PC-9 (cell line): ENCODE measurements at regions of chr12 and their contacts with region 1.

Region 1: GRCh38 chr12:53561590-53561953 is 54.3 kb upstream of the NPFF start:
- DNase-seq: peak; percentile 9 to 93
- H3K4me3 ChIP-seq: peak overlapping the region; percentile 28; the same call in 1 of the 2 replicates
- H3K27ac ChIP-seq: peak overlapping the region; percentile 78
- H3K4me1 ChIP-seq: peaks cover 26% of the 10 kb centered on the region
- H3K27me3 ChIP-seq: no peaks in the 10 kb centered on the region
- CTCF ChIP-seq: no peak

Region 2: DNA sequence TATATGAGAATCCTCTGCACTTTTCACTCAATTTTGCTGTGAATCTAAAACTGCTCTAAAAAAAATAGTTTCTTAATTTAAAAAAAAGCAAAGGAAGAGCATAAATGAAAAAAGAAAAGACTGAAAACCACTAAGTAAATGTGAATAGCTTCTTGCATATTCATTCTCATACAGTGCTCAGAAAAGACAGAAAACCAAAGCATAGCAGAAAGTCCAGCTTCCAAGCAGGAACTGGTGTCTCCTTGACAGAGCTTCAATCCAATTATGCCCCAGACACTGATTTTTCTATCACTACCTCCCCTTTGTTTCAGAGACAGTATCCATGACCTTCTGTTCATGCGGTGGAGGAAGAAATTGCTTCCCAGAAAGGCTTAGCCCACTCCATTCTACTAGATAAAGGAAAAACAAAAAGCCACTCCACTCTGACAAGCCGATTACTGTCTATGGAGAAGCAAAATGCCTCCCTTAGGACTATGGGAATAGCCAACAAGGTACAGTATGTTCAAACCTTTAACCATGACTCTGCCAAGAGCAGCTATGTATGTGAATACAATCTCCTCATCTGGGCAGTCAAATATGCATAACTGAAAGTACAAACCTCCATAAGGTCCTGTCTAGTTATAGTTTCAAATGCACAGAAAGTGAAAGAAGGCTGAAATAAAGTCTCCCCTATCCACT is 24.0 kb after region 1 on chr12:
- CTCF ChIA-PET with region 1: no interaction called
- POLR2A ChIA-PET with region 1: no interaction called
- intact Hi-C with region 1: no loop called
- DNase-seq: no peak
- H3K4me3 ChIP-seq: no peak overlapping the region
- H3K27ac ChIP-seq: no peak overlapping the region
- H3K4me1 ChIP-seq: no peaks in the 10 kb centered on the region
- H3K27me3 ChIP-seq: no peaks in the 10 kb centered on the region
- CTCF ChIP-seq: no peak

Region 3: DNA sequence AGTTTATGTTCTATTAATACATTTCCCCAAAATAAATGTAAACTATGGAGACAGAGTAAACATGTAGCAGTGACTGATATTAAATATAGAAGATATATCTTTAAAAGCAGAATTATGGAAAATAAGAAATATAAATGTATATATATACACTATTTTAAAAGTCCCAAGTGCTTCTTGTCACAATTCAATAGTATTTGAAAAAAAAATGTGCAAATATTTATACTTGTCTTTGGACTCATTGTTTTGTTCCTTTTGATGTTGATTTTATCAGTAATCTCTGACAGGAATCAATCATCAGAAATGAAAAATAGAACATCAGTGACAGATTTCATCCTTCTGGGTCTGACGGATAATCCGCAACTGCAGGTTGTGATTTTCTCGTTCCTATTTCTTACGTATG is 1864.4 kb after region 1 on chr12 and contains the start of gene OR6C76:
- CTCF ChIA-PET with region 1: interaction called, 10 read pairs
- POLR2A ChIA-PET with region 1: no interaction called
- intact Hi-C with region 1: no loop called
- DNase-seq: no peak
- H3K4me3 ChIP-seq: no peak within 1 kb of the TSS
- H3K27ac ChIP-seq: no peak within 1 kb of the TSS
- H3K4me1 ChIP-seq: no peaks in the 10 kb centered on the region
- H3K27me3 ChIP-seq: no peaks in the 10 kb centered on the region
- CTCF ChIP-seq: no peak
- total RNA-seq, gene OR6C76: not detected in 2 replicates